GM10248 (cell line): ENCODE measurements at regions of chr2 and their contacts with region 1.

Region 1: DNA sequence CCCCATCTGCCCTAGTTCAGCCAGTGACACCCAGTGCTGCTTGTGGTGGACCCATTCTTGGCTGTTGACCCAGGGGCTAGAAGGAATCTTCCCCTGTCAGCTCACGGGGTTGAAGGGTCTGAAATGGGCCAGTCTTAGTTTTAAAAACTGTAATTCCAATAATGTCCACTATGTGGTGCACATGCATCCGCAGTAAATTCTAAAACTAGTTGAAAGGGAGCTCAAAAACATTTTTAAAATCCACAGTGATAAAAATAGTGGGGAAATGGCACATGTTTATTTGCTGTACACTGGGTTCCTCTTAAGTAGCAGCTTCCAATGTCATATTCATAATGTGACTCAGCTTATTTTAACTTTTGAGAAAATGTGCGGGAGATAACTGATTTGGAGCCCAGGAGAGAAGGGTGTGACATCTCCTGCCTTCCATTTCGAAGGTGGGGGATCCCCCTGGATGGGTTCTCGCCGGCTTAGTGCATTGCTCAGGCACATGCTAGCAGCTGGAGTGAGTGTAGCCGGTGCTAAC is 32.8 kb downstream of the GRHL1 start:
- DNase-seq: peak; percentile 75
- CTCF ChIP-seq: peak; percentile 67

Region 2: DNA sequence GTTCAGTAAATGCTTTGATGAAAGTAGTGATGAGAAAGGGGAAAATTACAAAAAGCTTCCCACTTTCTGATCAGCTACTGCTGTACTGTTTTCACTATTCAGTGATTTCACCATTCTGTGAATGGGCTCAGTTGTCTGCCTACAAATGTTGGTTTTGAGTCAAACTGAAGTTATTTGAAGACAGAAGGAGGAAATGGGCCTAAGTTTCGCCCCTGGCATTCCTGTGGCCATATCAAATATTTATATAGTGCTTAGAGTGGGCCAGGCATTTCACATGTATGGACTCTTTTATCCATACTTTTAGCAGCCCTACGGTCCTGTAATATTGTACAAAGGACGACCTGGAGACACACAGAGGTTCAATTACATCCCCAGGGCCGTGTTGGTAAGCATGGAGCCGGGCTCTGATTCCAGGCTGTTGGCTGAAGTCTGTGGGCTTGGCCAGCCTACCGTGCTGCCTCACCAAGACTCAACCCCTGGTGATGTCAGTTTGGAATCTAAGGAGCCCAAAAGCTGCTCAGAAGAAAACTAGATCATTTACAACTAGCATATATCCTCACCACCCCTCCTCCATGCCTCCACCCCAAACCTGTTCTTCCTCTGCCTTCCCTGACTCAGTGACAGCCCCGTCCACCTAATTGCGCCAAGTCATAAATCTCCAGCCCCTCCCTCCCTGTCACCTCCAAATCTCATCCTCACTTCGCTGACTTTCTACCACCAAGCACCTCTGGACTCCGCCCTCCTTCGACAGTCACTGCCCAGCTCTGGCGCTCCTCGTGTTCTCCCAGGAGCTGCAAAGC is 42.9 kb before region 1 on chr2:
- CTCF ChIA-PET with region 1: interaction called, 14 read pairs
- POLR2A ChIA-PET with region 1: no interaction called
- DNase-seq: no peak
- CTCF ChIP-seq: no peak

Region 3: DNA sequence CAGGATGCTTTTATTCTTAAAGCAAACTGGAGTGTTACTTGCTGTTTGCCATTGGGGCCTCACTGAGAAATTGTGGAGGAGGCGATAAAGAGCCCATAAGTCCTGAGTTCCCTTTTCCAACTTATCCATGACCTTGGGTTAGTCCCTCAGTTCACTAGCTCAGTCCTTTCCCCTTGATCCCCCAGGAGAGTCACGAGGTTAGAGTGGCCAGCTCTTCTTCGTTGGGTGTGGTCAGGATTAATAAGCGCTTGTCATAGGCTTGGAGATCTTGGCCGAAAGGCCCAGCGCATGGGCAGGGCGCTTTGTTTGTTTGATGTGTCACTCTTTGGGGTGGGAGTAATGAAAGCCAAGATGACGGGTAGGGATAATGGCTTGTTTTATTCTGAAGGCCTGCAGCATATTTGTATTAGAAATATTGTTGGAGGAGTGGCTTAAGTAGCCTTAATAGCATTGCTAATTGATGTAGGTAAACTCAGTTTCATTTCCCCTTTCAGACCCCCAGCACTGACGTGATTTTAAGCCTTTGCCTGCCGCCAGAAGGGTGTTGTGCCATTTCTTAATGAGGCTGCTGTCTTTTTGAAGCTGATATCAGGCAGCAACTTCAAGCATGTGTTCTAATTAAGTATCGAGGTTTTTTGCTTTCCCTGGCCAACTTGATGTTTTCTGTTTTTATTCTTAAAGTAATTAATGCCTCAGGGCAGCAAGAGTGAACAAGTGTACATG is 17.1 kb before region 1 on chr2:
- CTCF ChIA-PET with region 1: interaction called, 54 read pairs
- POLR2A ChIA-PET with region 1: no interaction called
- DNase-seq: peak; percentile 40
- CTCF ChIP-seq: no peak

Region 4: DNA sequence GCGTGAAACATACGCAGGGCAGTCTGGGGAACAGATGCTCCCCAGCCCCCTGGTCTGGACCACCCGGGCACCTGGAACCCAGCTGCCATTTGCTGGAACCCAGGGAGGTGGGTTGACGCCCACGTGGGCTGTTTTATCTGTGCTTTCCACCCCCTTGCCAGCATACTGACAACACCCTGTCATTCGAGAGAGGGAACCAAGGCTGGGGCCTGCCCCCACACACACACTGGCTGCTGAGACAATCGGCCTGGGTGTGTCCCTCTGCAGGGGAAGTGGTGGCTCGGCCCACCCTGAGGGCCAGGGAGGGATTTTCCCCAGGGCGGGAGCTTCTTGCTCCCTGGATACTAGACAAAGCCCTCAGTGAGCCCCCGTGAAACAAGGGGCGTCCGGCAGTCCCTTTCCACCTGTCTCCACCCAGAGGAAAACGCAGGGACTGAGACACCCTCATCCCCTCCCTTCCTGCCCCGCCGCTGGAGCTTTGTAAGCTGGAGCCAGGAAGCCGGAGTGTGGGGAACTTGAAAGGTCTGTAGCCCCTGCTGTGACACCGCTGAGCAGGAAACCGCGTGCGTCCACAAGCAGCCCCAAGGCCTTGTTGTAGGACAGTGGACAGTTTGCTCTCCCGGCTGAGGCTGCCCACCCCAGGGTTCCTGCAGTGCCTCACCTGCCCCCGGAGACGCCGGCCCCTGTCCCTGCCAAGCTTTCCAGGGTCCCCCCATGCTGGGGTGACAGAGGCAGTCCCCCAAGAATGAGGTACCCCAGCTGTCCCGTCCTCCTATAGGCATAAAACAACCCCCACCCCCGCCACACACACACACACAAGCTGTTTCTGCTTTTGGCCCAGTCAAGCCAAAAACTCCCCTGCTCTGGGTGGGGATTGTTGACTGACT is 45.0 kb after region 1 on chr2:
- CTCF ChIA-PET with region 1: interaction called, 23 read pairs
- POLR2A ChIA-PET with region 1: no interaction called
- DNase-seq: peak; percentile 87
- CTCF ChIP-seq: no peak

Region 5: DNA sequence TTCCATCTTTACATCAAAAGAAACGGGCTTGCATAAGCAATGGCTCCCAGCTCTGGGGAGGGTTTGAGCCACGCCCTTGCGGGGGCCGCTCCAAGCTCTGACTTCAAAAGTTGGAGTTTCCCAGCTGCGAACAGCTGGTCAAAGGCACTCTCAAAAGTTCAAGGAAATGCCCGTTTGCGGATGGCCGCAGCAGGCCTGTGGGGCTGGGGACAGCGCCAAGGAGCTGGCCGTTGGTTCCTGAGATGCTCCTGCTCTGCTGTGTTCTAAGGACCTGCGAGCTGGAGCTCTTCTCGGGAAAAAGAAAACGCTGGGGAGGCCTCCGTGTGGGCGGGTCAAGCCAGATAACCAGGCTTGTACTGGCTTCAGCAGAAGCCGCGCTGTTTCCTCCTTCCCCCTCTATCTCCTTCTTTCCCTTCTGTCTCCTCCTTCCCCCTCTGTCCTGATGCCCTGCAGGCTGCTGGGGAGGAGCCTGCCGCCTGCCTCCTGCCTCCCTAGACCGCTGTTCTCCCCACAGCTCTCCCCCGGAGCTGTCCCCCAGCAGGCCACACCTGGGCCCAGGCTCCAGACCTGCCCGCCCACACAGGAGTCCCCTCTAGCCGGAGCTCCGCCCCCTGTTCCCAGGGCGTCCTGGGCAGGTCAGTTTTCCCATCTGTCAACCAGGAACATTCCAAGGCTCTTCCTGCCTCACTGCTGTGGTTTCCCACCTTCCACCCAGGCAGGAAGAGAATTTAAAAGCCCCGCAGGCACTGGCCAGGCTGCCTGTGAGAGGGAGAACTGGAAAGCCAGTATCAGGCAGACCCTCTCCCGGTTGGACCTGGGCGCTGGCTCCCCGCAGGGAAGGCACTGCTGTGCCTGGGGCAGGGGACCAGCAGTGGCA is 73.2 kb after region 1 on chr2:
- CTCF ChIA-PET with region 1: interaction called, 17 read pairs
- POLR2A ChIA-PET with region 1: no interaction called
- DNase-seq: peak; percentile 65
- CTCF ChIP-seq: no peak